MCF 10A (cell line): ENCODE measurements at regions of chr5 and their contacts with region 1.

Region 1: GRCh38 chr5:159209438-159210305 is at the start of gene RNF145:
- DNase-seq: peak; percentile 95
- H3K4me3 Mint-ChIP-seq: peak within 1 kb of the TSS; percentile 97
- H3K27ac Mint-ChIP-seq: peak within 1 kb of the TSS; percentile 99
- H3K4me1 Mint-ChIP-seq: peaks cover 42% of the 10 kb centered on the region
- H3K27me3 Mint-ChIP-seq: no peaks in the 10 kb centered on the region
- CTCF ChIP-seq: no peak
- total RNA-seq, gene RNF145: 122 and 157 TPM in 2 replicates

Region 2: DNA sequence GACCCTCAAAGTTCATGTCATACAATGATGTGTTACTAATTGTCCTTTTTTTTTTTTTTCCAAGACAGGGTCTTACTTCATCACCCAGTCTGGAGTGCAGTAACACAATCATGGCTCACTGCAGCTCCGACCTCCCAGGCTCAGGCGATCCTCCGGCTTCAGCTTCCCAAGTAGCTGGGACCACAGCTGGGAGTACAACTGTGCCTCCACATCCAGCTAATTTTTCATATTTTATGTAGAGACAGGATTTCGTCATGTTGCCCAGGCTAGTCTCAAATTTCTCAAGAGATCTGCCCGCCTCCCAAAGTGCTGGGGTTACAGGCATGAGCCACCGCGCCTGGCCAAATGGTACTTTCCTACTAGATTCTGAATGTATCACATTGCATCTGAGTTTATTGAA is 60.6 kb before region 1 on chr5:
- CTCF ChIA-PET with region 1: no interaction called
- POLR2A ChIA-PET with region 1: no interaction called
- intact Hi-C with region 1: no loop called
- DNase-seq: peak; percentile 31
- H3K4me3 Mint-ChIP-seq: no peak overlapping the region
- H3K27ac Mint-ChIP-seq: no peak overlapping the region
- H3K4me1 Mint-ChIP-seq: no peaks in the 10 kb centered on the region
- H3K27me3 Mint-ChIP-seq: peaks cover 11% of the 10 kb centered on the region
- CTCF ChIP-seq: no peak

Region 3: DNA sequence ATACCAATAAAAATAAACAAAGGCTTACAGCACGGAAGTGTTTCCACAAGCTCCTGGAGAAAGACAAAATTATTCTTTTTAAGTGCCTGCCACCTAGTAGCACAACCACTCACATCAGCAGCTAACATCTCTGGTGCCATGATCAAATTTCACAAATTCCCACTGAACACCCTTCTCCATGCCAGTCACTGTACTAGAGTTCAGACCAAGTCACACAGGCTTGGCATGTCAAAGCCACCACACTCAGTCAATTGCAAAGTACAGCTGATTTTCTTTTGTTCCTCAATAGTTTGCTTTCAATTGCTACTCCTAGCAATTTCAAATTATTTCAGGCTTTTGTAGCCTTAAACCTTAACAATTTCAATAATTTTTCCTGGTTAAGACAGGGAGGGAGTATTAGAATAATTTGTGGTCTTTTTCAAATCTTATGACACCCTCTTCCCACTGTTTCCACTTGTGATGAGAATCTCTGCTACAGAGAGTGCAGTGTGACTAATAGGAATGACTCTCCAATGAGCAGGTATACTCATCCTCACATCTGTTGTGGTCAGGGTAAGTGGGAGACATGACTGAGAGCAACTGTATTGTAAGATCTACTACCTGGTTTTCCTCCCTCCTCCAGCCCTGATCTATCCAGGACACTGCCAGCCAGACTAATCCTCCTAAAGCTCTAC is 46.5 kb before region 1 on chr5:
- CTCF ChIA-PET with region 1: interaction called, 24 read pairs
- POLR2A ChIA-PET with region 1: interaction called, 109 read pairs
- intact Hi-C with region 1: no loop called
- DNase-seq: peak; percentile 78
- H3K4me3 Mint-ChIP-seq: peak overlapping the region; percentile 3
- H3K27ac Mint-ChIP-seq: peak overlapping the region; percentile 69
- H3K4me1 Mint-ChIP-seq: peaks cover 27% of the 10 kb centered on the region
- H3K27me3 Mint-ChIP-seq: no peaks in the 10 kb centered on the region
- CTCF ChIP-seq: no peak

Region 4: GRCh38 chr5:159184858-159185381 is 24.8 kb before region 1 on chr5:
- CTCF ChIA-PET with region 1: interaction called, 6 read pairs
- POLR2A ChIA-PET with region 1: interaction called, 650 read pairs
- intact Hi-C with region 1: no loop called
- DNase-seq: peak; percentile 77
- H3K4me3 Mint-ChIP-seq: peak overlapping the region; percentile 48
- H3K27ac Mint-ChIP-seq: peak overlapping the region; percentile 96
- H3K4me1 Mint-ChIP-seq: peaks cover 81% of the 10 kb centered on the region
- H3K27me3 Mint-ChIP-seq: no peaks in the 10 kb centered on the region
- CTCF ChIP-seq: no peak

Region 5: GRCh38 chr5:159230657-159231056 is 21.0 kb after region 1 on chr5:
- CTCF ChIA-PET with region 1: interaction called, 18 read pairs
- POLR2A ChIA-PET with region 1: interaction called, 354 read pairs
- intact Hi-C with region 1: loop called (anchors 1 kb)
- DNase-seq: peak; percentile 89
- H3K4me3 Mint-ChIP-seq: peak overlapping the region; percentile 22
- H3K27ac Mint-ChIP-seq: peak overlapping the region; percentile 5
- H3K4me1 Mint-ChIP-seq: peaks cover 44% of the 10 kb centered on the region
- H3K27me3 Mint-ChIP-seq: no peaks in the 10 kb centered on the region
- CTCF ChIP-seq: no peak

Region 6: DNA sequence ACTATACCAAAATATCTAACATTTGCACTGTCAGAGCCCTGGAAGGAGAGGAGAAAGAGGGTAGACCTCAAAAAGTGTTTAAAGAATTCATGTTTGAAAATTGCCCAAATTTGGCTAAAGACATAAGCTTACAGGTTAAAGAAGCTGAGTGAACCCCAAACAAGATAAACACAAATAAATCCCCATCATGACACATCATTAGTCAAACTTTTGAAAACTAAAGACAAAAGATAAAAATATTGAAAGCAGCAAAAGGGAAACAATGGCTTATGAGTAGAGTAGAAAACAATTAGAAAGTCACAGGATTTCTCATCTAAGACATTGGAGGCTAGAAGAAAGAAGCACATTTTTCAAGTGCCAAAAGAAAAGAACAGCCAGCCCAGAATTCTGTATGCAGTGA is 47.3 kb after region 1 on chr5:
- CTCF ChIA-PET with region 1: interaction called, 8 read pairs
- POLR2A ChIA-PET with region 1: interaction called, 81 read pairs
- intact Hi-C with region 1: no loop called
- DNase-seq: no peak
- H3K4me3 Mint-ChIP-seq: no peak overlapping the region
- H3K27ac Mint-ChIP-seq: no peak overlapping the region
- H3K4me1 Mint-ChIP-seq: peaks cover 13% of the 10 kb centered on the region
- H3K27me3 Mint-ChIP-seq: no peaks in the 10 kb centered on the region
- CTCF ChIP-seq: no peak

Region 7: DNA sequence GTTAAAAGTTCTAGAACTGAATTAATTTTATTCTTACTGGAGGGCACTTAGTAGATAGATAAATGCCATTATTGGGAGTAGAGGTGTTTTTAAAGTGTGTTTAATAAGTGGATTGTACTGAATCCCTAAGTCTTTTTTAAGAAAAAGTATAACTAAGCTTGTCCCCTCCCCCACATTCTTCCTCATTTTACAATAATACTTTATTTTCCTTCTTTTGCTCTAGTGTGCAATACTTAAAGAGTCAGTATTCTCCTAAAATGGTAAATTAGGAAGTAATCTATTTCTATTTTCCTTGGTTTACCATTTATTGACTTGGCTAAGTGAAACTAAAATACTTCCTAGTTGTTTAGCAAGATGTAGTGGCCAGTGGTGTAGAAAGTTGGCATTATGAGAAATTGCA is 65.0 kb after region 1 on chr5:
- CTCF ChIA-PET with region 1: no interaction called
- POLR2A ChIA-PET with region 1: interaction called, 18 read pairs
- intact Hi-C with region 1: no loop called
- DNase-seq: no peak
- H3K4me3 Mint-ChIP-seq: peak overlapping the region; percentile 19
- H3K27ac Mint-ChIP-seq: peak overlapping the region; percentile 79
- H3K4me1 Mint-ChIP-seq: peaks cover 8% of the 10 kb centered on the region
- H3K27me3 Mint-ChIP-seq: no peaks in the 10 kb centered on the region
- CTCF ChIP-seq: no peak

Region 8: DNA sequence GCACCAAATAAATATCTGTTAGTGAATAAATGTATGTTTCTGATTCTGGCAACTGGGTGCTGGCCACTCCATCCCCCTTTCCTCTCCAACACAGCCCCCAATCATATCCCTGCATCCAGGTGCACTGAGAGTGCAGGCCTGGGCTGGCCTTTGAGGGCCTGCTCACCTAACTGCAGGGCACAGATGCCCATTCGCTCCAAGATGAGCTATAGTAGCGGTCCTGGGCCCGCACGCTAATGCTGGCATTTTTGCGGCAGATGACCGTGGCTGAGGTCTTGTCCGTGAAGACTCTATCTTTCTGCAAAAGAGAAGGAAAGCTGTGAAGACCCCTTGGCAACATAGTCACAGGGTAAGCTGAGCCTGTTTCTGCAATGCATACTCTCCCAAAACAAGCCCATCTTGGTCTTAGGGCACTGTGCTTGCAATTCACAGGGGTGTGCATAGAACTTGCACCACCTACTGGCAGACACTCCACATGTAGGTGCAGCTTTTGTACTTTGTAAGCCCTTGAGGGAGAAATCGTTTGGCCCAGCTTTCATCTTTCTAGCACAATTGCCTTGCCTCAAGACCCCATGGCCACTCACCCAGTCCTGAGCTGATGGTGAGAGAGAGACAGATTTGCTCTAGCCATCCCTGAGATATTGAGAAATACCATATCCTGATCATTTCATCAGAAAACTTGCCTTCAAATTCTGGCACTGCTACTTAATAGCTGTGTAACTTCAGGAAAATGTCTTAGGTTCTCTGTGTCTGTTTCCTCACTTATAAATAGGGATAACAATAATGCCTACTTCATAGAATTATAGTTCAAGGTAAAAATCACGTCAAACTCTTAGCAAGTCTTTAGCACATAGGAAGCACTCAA is 107.1 kb after region 1 on chr5:
- CTCF ChIA-PET with region 1: interaction called, 10 read pairs
- POLR2A ChIA-PET with region 1: interaction called, 7 read pairs
- intact Hi-C with region 1: loop called (anchors 1 kb)
- DNase-seq: peak; percentile 77
- H3K4me3 Mint-ChIP-seq: no peak overlapping the region
- H3K27ac Mint-ChIP-seq: no peak overlapping the region
- H3K4me1 Mint-ChIP-seq: no peaks in the 10 kb centered on the region
- H3K27me3 Mint-ChIP-seq: no peaks in the 10 kb centered on the region
- CTCF ChIP-seq: peak; percentile 91